PC-9 (cell line): ENCODE measurements at regions of chr1 and their contacts with region 1.

Region 1: DNA sequence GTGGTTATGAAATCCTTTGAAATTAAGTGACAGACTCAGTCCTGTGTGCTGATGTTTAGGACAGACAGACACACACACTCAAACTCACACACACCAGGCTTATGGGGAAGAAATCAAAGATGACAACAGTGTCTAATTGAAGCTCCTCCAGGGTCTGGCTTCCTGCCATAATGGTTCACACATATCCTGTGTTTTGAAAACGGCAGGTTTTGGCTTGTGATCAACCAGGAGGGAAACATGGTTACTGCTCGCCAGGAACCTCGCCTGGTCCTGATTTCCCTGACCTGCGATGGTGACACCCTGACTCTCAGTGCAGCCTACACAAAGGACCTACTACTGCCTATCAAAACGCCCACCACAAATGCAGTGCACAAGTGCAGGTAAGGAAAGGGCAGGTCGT is 4.6 kb downstream of the MTARC1 start:
- DNase-seq: no peak
- H3K4me3 ChIP-seq: no peak overlapping the region
- H3K27ac ChIP-seq: no peak overlapping the region
- H3K4me1 ChIP-seq: peaks cover 18% of the 10 kb centered on the region
- H3K27me3 ChIP-seq: no peaks in the 10 kb centered on the region
- CTCF ChIP-seq: no peak

Region 2: GRCh38 chr1:220046052-220046930 is 745.0 kb before region 1 on chr1 and contains the start of gene EPRS1:
- CTCF ChIA-PET with region 1: no interaction called
- POLR2A ChIA-PET with region 1: no interaction called
- intact Hi-C with region 1: loop called (anchors 10 kb)
- DNase-seq: peak; percentile 94 to 97
- H3K4me3 ChIP-seq: peak within 1 kb of the TSS; percentile 95
- H3K27ac ChIP-seq: peak within 1 kb of the TSS; percentile 87
- H3K4me1 ChIP-seq: peaks cover 25% of the 10 kb centered on the region
- H3K27me3 ChIP-seq: no peaks in the 10 kb centered on the region
- CTCF ChIP-seq: peak; percentile 64
- total RNA-seq, gene EPRS1: 158 and 182 TPM in 2 replicates

Region 3: DNA sequence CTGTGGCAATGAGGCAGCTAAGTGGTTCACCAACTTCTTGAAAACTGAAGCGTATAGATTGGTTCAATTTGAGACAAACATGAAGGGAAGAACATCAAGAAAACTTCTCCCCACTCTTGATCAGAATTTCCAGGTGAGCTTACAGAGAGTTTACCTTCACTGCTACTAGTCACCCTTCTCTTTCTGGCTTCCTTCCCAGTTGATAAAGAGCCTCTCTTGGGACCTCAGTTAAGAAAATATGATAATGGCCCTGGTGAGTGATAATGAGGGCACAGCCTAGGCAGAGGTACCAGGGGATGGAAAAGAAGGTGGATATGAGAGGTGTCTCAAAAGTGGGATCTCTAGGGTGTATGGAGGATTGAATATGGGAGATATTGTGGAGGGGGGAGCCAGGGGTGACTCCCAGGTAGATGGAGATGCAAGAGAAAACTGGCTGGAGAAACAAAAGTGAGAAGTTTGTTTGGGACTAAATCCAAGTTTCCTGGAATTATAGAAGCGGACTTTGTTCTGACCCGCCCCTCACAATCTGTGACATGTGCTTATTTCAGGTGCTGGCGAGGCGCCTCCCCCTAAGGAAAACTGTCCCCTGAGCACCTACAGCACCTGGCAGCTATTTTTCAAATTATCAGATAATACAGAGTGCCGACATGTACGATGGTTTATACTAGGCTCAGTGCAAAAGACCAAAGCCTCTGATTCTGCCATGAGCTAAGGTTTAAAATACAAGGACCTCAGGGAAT is 29.4 kb before region 1 on chr1:
- CTCF ChIA-PET with region 1: no interaction called
- POLR2A ChIA-PET with region 1: no interaction called
- intact Hi-C with region 1: no loop called
- DNase-seq: no peak
- H3K4me3 ChIP-seq: no peak overlapping the region
- H3K27ac ChIP-seq: no peak overlapping the region
- H3K4me1 ChIP-seq: no peaks in the 10 kb centered on the region
- H3K27me3 ChIP-seq: no peaks in the 10 kb centered on the region
- CTCF ChIP-seq: no peak